ENCODE measurements at regions of chr7 and their contacts with region 1.

Region 1: DNA sequence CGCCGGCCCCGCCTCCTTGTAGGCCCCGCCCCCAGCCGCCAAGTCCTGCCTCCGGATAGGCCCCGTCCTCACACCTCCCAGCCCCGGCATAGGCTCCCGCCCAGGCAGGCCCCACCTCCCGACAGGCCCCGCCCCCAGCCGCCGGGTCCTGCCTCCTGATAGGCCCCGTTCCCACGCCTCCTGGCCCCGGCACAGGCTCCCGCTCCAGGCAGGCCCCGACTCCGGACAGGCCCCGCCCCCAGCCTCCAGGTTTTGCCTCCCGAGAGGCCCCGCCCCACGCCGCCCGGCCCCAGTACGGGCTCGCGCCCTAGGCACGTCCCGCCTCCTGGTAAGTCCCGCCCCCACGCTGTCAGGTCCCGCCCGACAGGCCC is 237 bp upstream of the MICALL2 start:
- DNase-seq: peak; percentile 100
- ATAC-seq: peak; percentile 96
- H3K4me3 ChIP-seq: peak overlapping the region in 1 of 2 donors; percentile 50
- H3K27ac ChIP-seq: no peak overlapping the region
- H3K4me1 ChIP-seq: no peaks in the 10 kb centered on the region
- H3K27me3 ChIP-seq: no peaks in the 10 kb centered on the region

Region 2: GRCh38 chr7:1537535-1538412 is 78.3 kb after region 1 on chr7:
- intact Hi-C with region 1: loop called in 1 of 2 experiments (anchors 2 kb)
- DNase-seq: peak; percentile 94 to 99
- ATAC-seq: peak; percentile 75
- H3K4me3 ChIP-seq: peak overlapping the region; percentile 34 to 36
- H3K27ac ChIP-seq: peak overlapping the region; percentile 88 to 98
- H3K4me1 ChIP-seq: no peaks in the 10 kb centered on the region
- H3K27me3 ChIP-seq: no peaks in the 10 kb centered on the region

Measured in aorta (tissue), 5 donors.